Adrenal gland (tissue), 19 donors: ENCODE measurements at regions of chr6 and their contacts with region 1.

Region 1: GRCh38 chr6:18595774-18596530 is 208.8 kb downstream of the RNF144B start:
- DNase-seq: peak; percentile 41 to 74 (median 65)
- H3K4me3 ChIP-seq: no peak overlapping the region
- H3K27ac ChIP-seq: no peak overlapping the region
- H3K4me1 ChIP-seq: no peaks in the 10 kb centered on the region
- H3K27me3 ChIP-seq: peaks cover 5% of the 10 kb centered on the region
- CTCF ChIP-seq: peak; percentile 63 to 90 (median 76)
- POLR2A ChIP-seq: no peak

Region 2: GRCh38 chr6:20056350-20056992 is 1460.5 kb after region 1 on chr6:
- intact Hi-C with region 1: loop called in 1 of 2 experiments (anchors 5 kb)
- DNase-seq: no peak
- H3K4me3 ChIP-seq: no peak overlapping the region
- H3K27ac ChIP-seq: no peak overlapping the region
- H3K4me1 ChIP-seq: no peaks in the 10 kb centered on the region
- H3K27me3 ChIP-seq: no peaks in the 10 kb centered on the region
- CTCF ChIP-seq: peak; percentile 30 to 55 (median 43)
- POLR2A ChIP-seq: no peak